Activated CD8-positive, alpha-beta T cell treated with anti-CD3 and anti-CD28 coated beads for 36 hours (primary cell): ENCODE measurements at regions of chr17 and their contacts with region 1.

Region 1: GRCh38 chr17:66673668-66674315 is 161.1 kb upstream of the CACNG5 start:
- DNase-seq: peak; percentile 54
- ATAC-seq: peak; percentile 81
- H3K4me3 Mint-ChIP-seq: no peak overlapping the region
- H3K27ac Mint-ChIP-seq: peak overlapping the region; percentile 76
- H3K4me1 Mint-ChIP-seq: peaks cover 65% of the 10 kb centered on the region
- H3K27me3 Mint-ChIP-seq: no peaks in the 10 kb centered on the region
- CTCF ChIP-seq: peak; percentile 73

Region 2: GRCh38 chr17:66431910-66432683 is 241.7 kb before region 1 on chr17:
- CTCF ChIA-PET with region 1: no interaction called
- POLR2A ChIA-PET with region 1: no interaction called
- intact Hi-C with region 1: loop called (anchors 10 kb)
- DNase-seq: no peak
- ATAC-seq: no peak
- H3K4me3 Mint-ChIP-seq: no peak overlapping the region
- H3K27ac Mint-ChIP-seq: peak overlapping the region; percentile 37
- H3K4me1 Mint-ChIP-seq: peaks cover 47% of the 10 kb centered on the region
- H3K27me3 Mint-ChIP-seq: no peaks in the 10 kb centered on the region
- CTCF ChIP-seq: no peak

Region 3: GRCh38 chr17:66799849-66800537 is 126.2 kb after region 1 on chr17:
- CTCF ChIA-PET with region 1: no interaction called
- POLR2A ChIA-PET with region 1: no interaction called
- intact Hi-C with region 1: no loop called
- DNase-seq: no peak
- ATAC-seq: no peak
- H3K4me3 Mint-ChIP-seq: no peak overlapping the region
- H3K27ac Mint-ChIP-seq: no peak overlapping the region
- H3K4me1 Mint-ChIP-seq: no peaks in the 10 kb centered on the region
- H3K27me3 Mint-ChIP-seq: no peaks in the 10 kb centered on the region
- CTCF ChIP-seq: no peak